Gastrocnemius medialis (tissue), 4 donors: ENCODE measurements at regions of chr5 and their contacts with region 1.

Region 1: DNA sequence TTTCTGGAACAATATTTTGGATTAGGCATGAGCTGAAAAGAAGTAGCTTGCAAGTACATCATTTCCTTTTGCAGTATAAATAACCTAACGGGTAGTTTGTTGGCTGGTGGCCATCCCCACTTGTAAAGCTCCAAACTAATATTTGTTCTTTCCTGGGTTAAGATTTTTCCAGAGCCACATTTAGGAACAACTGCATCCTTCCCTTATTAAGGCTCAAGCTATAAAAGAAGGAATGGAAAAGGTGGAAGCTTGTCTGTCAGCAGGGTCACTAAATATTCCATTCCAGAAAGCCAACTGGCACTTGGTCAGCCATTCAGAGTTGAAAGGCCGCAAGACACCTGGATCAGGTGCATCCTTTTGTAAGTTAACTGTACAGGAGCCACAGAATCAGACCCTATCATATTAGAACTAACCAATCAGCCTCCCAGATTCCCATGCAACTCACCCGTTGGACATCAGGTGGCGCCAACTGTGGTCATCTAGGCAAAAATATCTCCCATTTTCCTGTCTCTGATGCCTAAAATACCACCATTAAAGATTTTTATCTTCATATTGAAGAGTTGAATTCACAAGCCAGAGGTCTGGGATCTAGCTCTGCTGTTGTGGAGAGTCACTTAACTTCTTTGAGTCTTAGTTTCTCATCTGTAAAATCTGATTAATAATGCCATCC is 82.9 kb downstream of the PTCD2 start:
- DNase-seq: no peak
- ATAC-seq: no peak
- H3K4me3 ChIP-seq: no peak overlapping the region
- H3K27ac ChIP-seq: peak overlapping the region; percentile 42 to 68 (median 54)
- H3K4me1 ChIP-seq: peaks cover 8 to 10% of the 10 kb centered on the region in 2 donors
- H3K27me3 ChIP-seq: no peaks in the 10 kb centered on the region
- CTCF ChIP-seq: no peak
- POLR2A ChIP-seq: no peak

Region 2: DNA sequence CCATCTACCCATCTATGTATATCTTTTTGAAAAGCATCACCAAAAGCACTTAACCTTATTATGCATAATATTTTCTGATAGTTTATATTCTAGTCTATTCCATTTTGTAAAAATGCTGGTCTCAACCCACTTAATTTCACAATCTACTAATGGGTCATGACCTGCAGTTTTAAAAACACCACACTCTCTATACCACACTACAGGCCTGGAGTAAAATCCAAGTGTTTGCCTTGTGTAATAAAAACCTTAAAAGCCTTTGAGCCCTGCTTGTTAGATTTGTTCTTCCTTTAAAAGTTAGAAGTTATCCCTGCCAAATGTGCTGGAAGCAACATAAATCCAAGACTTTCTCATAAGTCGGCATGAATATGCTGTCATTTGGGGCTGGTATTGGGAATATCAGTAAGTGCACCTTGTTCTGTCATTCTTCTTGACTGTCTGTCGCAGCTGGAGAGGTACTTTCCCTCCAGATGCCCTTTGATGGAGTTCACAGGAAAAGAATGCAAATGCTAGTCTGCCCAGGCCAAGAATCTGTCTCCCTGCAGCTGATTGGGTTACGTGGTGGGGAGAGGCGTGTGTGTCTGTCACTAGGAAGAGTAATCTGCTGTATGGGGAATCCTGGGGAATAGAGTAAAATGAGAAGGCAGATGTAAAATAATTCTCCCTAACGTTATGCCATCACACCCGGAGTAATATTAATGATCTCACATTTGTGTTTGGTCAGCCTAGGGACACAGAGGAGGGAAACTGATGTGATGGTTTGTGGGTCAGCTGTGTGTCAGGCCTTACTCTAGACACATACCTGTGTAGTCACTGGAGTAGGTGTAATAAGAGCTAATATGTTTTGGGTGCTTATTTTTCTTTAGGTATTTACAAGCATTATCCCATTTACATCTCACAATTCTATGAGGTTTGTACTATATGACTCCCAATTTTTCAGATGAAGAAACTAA is 24.7 kb after region 1 on chr5:
- in situ Hi-C with region 1: no loop called
- intact Hi-C with region 1: loop called (anchors 2 kb)
- DNase-seq: peak; percentile 18 to 55
- ATAC-seq: peak; percentile 81 to 95
- H3K4me3 ChIP-seq: no peak overlapping the region
- H3K27ac ChIP-seq: peak overlapping the region; percentile 19 to 69 (median 44)
- H3K4me1 ChIP-seq: peaks cover 25 to 28% of the 10 kb centered on the region in 2 donors
- H3K27me3 ChIP-seq: no peaks in the 10 kb centered on the region
- CTCF ChIP-seq: no peak
- POLR2A ChIP-seq: no peak

Region 3: GRCh38 chr5:72451741-72452505 is 48.8 kb after region 1 on chr5:
- in situ Hi-C with region 1: loop called in 1 of 4 experiments (anchors 10 kb)
- intact Hi-C with region 1: no loop called
- DNase-seq: peak; percentile 63 to 75
- ATAC-seq: peak; percentile 74 to 78
- H3K4me3 ChIP-seq: peak overlapping the region in 2 of 4 donors; percentile 1 to 14
- H3K27ac ChIP-seq: peak overlapping the region; percentile 82 to 92 (median 88)
- H3K4me1 ChIP-seq: peaks cover 50 to 67% of the 10 kb centered on the region in 2 donors
- H3K27me3 ChIP-seq: no peaks in the 10 kb centered on the region
- CTCF ChIP-seq: no peak
- POLR2A ChIP-seq: no peak